HCT116 (cell line): ENCODE measurements at regions of chr3 and their contacts with region 1.

Region 1: DNA sequence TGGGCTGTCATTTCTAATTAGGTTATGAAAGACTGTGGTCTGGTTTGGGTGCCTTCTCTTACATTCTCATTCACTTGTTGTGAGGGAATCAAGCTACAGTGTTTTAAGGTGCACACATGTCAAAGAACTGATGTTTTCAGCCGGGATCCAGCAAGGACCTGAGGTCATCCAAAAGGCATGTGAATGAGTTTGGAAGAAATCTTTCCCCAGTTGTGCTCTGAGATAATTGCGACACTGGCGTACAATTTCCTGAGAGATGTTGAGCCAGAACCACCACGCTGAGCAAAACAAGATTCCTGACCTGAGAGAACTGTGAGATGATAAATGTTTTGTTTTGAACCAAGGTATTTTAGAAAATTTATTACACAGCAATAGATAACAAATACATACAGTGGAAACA is 295.3 kb upstream of the SLITRK3 start:
- DNase-seq: no peak
- ATAC-seq: no peak
- H3K4me3 ChIP-seq: no peak overlapping the region
- H3K27ac ChIP-seq: no peak overlapping the region
- H3K4me1 ChIP-seq: no peaks in the 10 kb centered on the region
- H3K27me3 ChIP-seq: no peaks in the 10 kb centered on the region
- CTCF ChIP-seq: no peak
- POLR2A ChIP-seq: no peak
- RAD21 ChIP-seq: no peak

Region 2: DNA sequence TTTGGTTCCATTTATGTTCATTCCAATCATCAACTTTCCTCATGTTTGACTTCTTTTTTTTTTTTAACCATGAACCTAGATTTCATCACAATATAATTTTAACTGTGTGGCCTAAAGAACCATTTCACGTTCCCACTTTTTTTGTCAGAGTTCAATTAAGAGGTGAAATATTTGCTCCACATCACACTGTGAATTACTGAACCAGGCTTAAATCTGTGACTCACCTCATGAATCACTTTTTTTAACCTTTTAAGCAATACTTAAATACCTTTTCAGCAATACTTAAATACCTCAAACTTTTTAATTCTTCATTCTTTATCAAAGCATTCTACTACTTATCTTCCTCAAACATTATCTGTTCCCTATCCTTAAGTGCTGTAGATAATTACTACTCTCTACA is 550.8 kb before region 1 on chr3:
- CTCF ChIA-PET with region 1: no interaction called
- POLR2A ChIA-PET with region 1: no interaction called
- RAD21 ChIA-PET with region 1: no interaction called
- intact Hi-C with region 1: no loop called
- DNase-seq: no peak
- ATAC-seq: no peak; the same call in 1 of the 2 replicates
- H3K4me3 ChIP-seq: no peak overlapping the region
- H3K27ac ChIP-seq: no peak overlapping the region
- H3K4me1 ChIP-seq: peaks cover 0 to 7% of the 10 kb centered on the region in 2 experiments; a peak in 2 of 4 replicates
- H3K27me3 ChIP-seq: no peaks in the 10 kb centered on the region
- CTCF ChIP-seq: no peak
- POLR2A ChIP-seq: no peak
- RAD21 ChIP-seq: no peak

Region 3: DNA sequence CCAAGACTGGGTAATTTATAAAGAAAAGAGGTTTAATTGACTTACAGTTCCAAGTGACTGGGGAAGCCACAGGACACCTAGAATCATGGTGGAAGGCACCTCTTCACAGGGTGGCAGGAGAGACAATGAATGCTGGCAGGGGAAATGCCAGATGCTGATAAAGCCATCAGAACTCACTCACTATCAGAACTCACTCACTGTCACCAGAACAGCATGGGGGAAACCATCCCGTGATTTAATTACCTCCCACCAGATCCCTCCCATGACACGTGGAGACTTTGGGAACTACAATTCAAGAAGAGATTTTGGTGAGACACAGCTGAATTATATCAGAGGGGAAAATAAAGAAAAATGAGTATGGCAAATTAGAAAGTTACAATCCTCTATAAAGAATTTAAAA is 34.9 kb after region 1 on chr3:
- CTCF ChIA-PET with region 1: no interaction called
- POLR2A ChIA-PET with region 1: no interaction called
- RAD21 ChIA-PET with region 1: no interaction called
- intact Hi-C with region 1: loop called (anchors 2 kb)
- DNase-seq: no peak
- ATAC-seq: no peak
- H3K4me3 ChIP-seq: no peak overlapping the region
- H3K27ac ChIP-seq: no peak overlapping the region
- H3K4me1 ChIP-seq: no peaks in the 10 kb centered on the region
- H3K27me3 ChIP-seq: no peaks in the 10 kb centered on the region
- CTCF ChIP-seq: no peak
- POLR2A ChIP-seq: no peak
- RAD21 ChIP-seq: no peak

Region 4: DNA sequence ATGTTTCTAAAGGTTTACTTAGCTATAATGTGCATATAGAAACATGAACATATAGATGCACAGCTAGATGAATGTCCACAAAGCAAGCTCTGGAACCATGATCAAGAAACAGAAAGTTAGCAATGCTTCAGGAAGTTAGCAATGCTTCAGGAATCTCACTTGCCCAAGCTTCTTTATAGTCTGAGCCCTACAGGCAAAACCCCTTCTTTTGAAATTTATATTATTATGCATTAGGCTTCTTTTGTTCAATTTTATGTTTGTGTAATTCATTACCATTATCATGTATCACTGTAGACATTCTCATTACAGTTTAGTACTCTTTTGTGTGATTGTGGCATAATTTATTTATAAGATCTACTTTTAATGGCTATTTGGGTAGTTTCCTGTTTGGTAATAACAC is 632.1 kb after region 1 on chr3:
- CTCF ChIA-PET with region 1: no interaction called
- POLR2A ChIA-PET with region 1: no interaction called
- RAD21 ChIA-PET with region 1: no interaction called
- intact Hi-C with region 1: no loop called
- DNase-seq: no peak
- ATAC-seq: no peak
- H3K4me3 ChIP-seq: no peak overlapping the region
- H3K27ac ChIP-seq: no peak overlapping the region
- H3K4me1 ChIP-seq: no peaks in the 10 kb centered on the region
- H3K27me3 ChIP-seq: no peaks in the 10 kb centered on the region
- CTCF ChIP-seq: no peak
- POLR2A ChIP-seq: no peak
- RAD21 ChIP-seq: no peak